Naive thymus-derived CD4-positive, alpha-beta T cell (primary cell): ENCODE measurements at regions of chr14 and their contacts with region 1.

Region 1: GRCh38 chr14:91866061-91866460 is 1.3 kb downstream of the TC2N start:
- DNase-seq: peak in 6 of 9 donors; percentile 29 to 51 (median 34)
- ATAC-seq: no peak
- H3K4me3 ChIP-seq: peak overlapping the region; percentile 88
- H3K4me3 Mint-ChIP-seq: peak overlapping the region; percentile 83 to 99 (median 96)
- H3K27ac ChIP-seq: peak overlapping the region; percentile 91
- H3K27ac Mint-ChIP-seq: peak overlapping the region; percentile 96 to 100 (median 99)
- H3K4me1 ChIP-seq: peaks cover 64 to 67% of the 10 kb centered on the region in 2 donors
- H3K4me1 Mint-ChIP-seq: peaks cover 55 to 84% (median 70%) of the 10 kb centered on the region in 7 donors
- H3K27me3 ChIP-seq: no peaks in the 10 kb centered on the region
- H3K27me3 Mint-ChIP-seq: no peaks in the 10 kb centered on the region

Region 2: DNA sequence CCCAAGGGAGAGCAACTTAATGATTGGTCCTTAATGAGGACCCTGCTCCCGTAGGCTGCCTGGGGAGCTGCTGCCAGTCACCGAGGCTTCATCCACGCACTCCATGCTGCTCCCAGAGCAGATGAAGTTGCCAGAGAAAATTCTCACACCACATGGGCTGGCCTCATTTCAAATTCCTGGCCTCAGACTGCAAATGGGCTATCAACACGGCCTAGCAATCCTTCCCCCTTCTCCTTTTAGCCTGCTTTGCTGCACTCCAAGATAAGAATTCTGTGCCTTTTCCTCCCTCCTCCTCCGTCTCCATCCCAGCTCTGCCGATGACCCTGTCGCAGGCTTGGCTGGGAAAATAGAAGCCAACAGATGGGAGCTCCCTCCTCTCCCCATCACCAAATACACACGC is 762.9 kb before region 1 on chr14:
- CTCF ChIA-PET with region 1: no interaction called
- POLR2A ChIA-PET with region 1: no interaction called
- intact Hi-C with region 1: no loop called
- DNase-seq: no peak
- ATAC-seq: no peak
- H3K4me3 ChIP-seq: no peak overlapping the region
- H3K4me3 Mint-ChIP-seq: no peak overlapping the region
- H3K27ac ChIP-seq: no peak overlapping the region
- H3K27ac Mint-ChIP-seq: peak overlapping the region in 1 of 9 donors; percentile 41
- H3K4me1 ChIP-seq: peaks cover 0 to 2% of the 10 kb centered on the region in 2 donors
- H3K4me1 Mint-ChIP-seq: peaks cover 5 to 10% (median 8%) of the 10 kb centered on the region in 7 donors
- H3K27me3 ChIP-seq: no peaks in the 10 kb centered on the region
- H3K27me3 Mint-ChIP-seq: peaks cover 0 to 10% (median 0%) of the 10 kb centered on the region in 5 donors

Region 3: GRCh38 chr14:91244501-91244901 is 621.6 kb before region 1 on chr14 and contains the start of gene GPR68:
- CTCF ChIA-PET with region 1: no interaction called
- POLR2A ChIA-PET with region 1: interaction called, 10 read pairs
- intact Hi-C with region 1: loop called in 1 of 2 experiments (anchors 5 kb)
- DNase-seq: peak in 2 of 9 donors; percentile 25 to 39
- ATAC-seq: no peak
- H3K4me3 ChIP-seq: peak within 1 kb of the TSS; percentile 59
- H3K4me3 Mint-ChIP-seq: peak within 1 kb of the TSS; percentile 72 to 91 (median 82)
- H3K27ac ChIP-seq: peak within 1 kb of the TSS; percentile 89
- H3K27ac Mint-ChIP-seq: peak within 1 kb of the TSS; percentile 79 to 100 (median 98)
- H3K4me1 ChIP-seq: peaks cover 51 to 63% of the 10 kb centered on the region in 2 donors
- H3K4me1 Mint-ChIP-seq: peaks cover 56 to 96% (median 89%) of the 10 kb centered on the region in 7 donors
- H3K27me3 ChIP-seq: no peaks in the 10 kb centered on the region
- H3K27me3 Mint-ChIP-seq: no peaks in the 10 kb centered on the region
- total RNA-seq, gene GPR68: 0.86 to 38.6 (median 2.3) TPM

Region 4: DNA sequence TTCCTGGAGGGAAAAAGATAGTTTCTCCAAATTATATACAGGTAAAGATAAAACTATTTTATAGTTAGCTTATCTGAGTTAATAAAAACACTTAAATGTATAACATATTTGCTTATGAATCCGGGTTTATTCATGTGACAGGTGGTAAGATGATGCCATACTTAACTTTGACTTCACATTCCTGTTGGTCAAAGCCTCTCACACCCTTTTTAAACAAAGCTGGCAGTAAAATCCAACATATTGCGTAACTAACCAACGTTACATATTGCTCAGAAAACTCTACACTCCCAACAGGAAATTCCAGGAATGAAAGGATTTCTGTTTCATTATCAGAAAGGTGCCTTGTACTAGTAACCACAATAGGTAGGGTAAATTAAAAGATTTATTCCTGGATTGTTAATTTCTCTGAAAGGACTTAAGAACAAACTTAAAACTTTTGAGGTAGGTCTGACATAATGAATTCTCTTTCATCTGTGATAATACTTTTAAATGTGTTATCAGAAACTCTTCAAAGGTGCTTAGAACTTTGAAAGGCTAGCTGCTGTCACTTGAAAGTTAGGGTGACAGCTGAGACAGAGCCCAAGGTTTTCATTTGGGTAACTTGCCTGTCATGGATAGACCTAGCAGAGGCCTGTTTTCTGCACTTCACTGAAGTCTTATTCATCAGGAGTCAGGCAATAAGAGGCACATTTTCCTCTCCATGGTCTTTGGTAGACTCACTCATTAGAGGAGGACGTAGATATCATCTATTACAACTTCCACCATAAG is 110.3 kb before region 1 on chr14:
- CTCF ChIA-PET with region 1: no interaction called
- POLR2A ChIA-PET with region 1: no interaction called
- intact Hi-C with region 1: no loop called
- DNase-seq: no peak
- ATAC-seq: no peak
- H3K4me3 ChIP-seq: no peak overlapping the region
- H3K4me3 Mint-ChIP-seq: no peak overlapping the region
- H3K27ac ChIP-seq: no peak overlapping the region
- H3K27ac Mint-ChIP-seq: no peak overlapping the region
- H3K4me1 ChIP-seq: no peaks in the 10 kb centered on the region
- H3K4me1 Mint-ChIP-seq: peaks cover 0 to 9% (median 2%) of the 10 kb centered on the region in 7 donors
- H3K27me3 ChIP-seq: no peaks in the 10 kb centered on the region
- H3K27me3 Mint-ChIP-seq: no peaks in the 10 kb centered on the region

Region 5: GRCh38 chr14:91796617-91797347 is 69.3 kb before region 1 on chr14:
- CTCF ChIA-PET with region 1: no interaction called
- POLR2A ChIA-PET with region 1: interaction called, 5 read pairs
- intact Hi-C with region 1: loop called in 1 of 2 experiments (anchors 2 kb)
- DNase-seq: no peak
- ATAC-seq: no peak
- H3K4me3 ChIP-seq: no peak overlapping the region
- H3K4me3 Mint-ChIP-seq: no peak overlapping the region
- H3K27ac ChIP-seq: no peak overlapping the region
- H3K27ac Mint-ChIP-seq: peak overlapping the region in 6 of 9 donors; percentile 46 to 83 (median 69)
- H3K4me1 ChIP-seq: peaks cover 0 to 12% of the 10 kb centered on the region in 2 donors
- H3K4me1 Mint-ChIP-seq: peaks cover 2 to 39% (median 15%) of the 10 kb centered on the region in 7 donors
- H3K27me3 ChIP-seq: no peaks in the 10 kb centered on the region
- H3K27me3 Mint-ChIP-seq: no peaks in the 10 kb centered on the region

Region 6: DNA sequence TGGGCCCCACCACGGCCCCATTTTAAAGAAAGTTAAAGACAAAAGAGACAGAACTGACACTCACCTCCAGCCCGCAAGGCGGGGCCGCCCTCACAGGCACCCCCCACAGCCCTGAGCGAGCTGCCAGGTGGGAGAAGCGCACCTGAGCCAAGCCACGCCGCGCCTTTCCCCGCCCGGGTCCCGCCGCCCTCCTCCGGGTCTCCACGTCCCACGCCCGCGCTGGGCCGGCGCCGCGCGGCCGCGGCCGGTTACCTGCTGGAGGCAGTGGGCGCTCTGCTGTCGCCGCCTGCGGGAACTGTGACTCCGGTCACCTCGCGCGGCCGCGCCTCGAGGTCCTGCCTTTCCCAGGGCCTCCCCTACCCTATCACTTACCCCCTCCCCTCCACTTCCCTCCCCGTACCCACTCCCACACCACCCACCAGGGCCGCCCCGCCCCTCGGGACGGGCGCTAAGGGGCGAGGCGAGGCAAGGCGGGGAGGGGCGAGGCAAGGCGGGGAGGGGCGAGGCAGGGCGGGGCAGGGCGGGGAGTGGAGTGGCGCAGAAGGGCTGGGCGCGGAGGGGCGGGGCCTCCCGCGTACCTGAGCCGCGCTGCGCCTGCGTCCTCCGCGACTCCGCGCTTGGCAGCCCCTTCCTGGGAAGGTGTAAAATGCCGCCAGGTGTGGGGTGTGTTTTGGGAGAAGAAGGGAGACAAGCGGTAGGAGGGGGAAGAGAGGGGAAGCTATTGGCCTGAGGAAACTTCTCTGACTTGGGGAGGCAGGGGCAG is 29.8 kb before region 1 on chr14:
- CTCF ChIA-PET with region 1: interaction called, 6 read pairs
- POLR2A ChIA-PET with region 1: interaction called, 194 read pairs
- intact Hi-C with region 1: loop called (anchors 1 to 2 kb)
- DNase-seq: peak; percentile 71 to 92 (median 86)
- ATAC-seq: peak; percentile 94
- H3K4me3 ChIP-seq: peak overlapping the region; percentile 61
- H3K4me3 Mint-ChIP-seq: peak overlapping the region; percentile 71 to 96 (median 90)
- H3K27ac ChIP-seq: peak overlapping the region; percentile 79
- H3K27ac Mint-ChIP-seq: peak overlapping the region in 8 of 9 donors; percentile 86 to 97 (median 91)
- H3K4me1 ChIP-seq: peaks cover 36 to 41% of the 10 kb centered on the region in 2 donors
- H3K4me1 Mint-ChIP-seq: peaks cover 40 to 93% (median 87%) of the 10 kb centered on the region in 7 donors
- H3K27me3 ChIP-seq: no peaks in the 10 kb centered on the region
- H3K27me3 Mint-ChIP-seq: peaks cover 0 to 6% (median 0%) of the 10 kb centered on the region in 5 donors

Region 7: GRCh38 chr14:91883753-91884152 is 17.7 kb after region 1 on chr14:
- CTCF ChIA-PET with region 1: interaction called, 4 read pairs
- POLR2A ChIA-PET with region 1: interaction called, 131 read pairs
- intact Hi-C with region 1: loop called in 1 of 2 experiments (anchors 2 kb)
- DNase-seq: no peak
- ATAC-seq: no peak
- H3K4me3 ChIP-seq: no peak overlapping the region
- H3K4me3 Mint-ChIP-seq: no peak overlapping the region
- H3K27ac ChIP-seq: no peak overlapping the region
- H3K27ac Mint-ChIP-seq: peak overlapping the region in 6 of 9 donors; percentile 12 to 75 (median 42)
- H3K4me1 ChIP-seq: peaks cover 19 to 21% of the 10 kb centered on the region in 2 donors
- H3K4me1 Mint-ChIP-seq: peaks cover 33 to 48% (median 38%) of the 10 kb centered on the region in 7 donors
- H3K27me3 ChIP-seq: no peaks in the 10 kb centered on the region
- H3K27me3 Mint-ChIP-seq: no peaks in the 10 kb centered on the region

Region 8: GRCh38 chr14:91899212-91899611 is 33.2 kb after region 1 on chr14:
- CTCF ChIA-PET with region 1: interaction called, 9 read pairs
- POLR2A ChIA-PET with region 1: interaction called, 131 read pairs
- intact Hi-C with region 1: no loop called
- DNase-seq: peak in 1 of 9 donors; percentile 21
- ATAC-seq: no peak
- H3K4me3 ChIP-seq: no peak overlapping the region
- H3K4me3 Mint-ChIP-seq: no peak overlapping the region
- H3K27ac ChIP-seq: no peak overlapping the region
- H3K27ac Mint-ChIP-seq: peak overlapping the region in 1 of 9 donors; percentile 77
- H3K4me1 ChIP-seq: no peaks in the 10 kb centered on the region
- H3K4me1 Mint-ChIP-seq: peaks cover 2 to 33% (median 17%) of the 10 kb centered on the region in 7 donors
- H3K27me3 ChIP-seq: no peaks in the 10 kb centered on the region
- H3K27me3 Mint-ChIP-seq: no peaks in the 10 kb centered on the region

Region 9: DNA sequence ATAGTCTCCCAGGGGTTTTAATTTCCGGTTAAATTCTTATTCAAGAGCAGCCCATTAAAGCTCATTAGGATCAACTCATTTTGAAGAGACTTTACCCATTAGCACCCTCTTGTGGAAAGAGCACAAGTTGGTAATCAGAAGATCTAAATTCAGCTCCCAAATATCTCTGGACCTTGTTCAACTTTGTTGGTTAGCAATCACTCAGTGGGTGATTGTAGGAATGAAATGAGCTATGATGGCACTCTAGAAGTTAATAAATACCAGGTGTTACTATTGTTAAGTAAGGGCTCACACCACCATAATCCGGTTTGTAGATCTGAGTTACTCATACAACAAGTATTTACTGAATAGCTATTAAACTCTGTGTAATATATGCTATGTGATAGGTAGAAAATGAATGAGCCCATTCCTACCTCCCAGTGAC is 130.9 kb after region 1 on chr14:
- CTCF ChIA-PET with region 1: no interaction called
- POLR2A ChIA-PET with region 1: no interaction called
- intact Hi-C with region 1: no loop called
- DNase-seq: peak in 7 of 9 donors; percentile 12 to 58 (median 44)
- ATAC-seq: peak; percentile 66
- H3K4me3 ChIP-seq: no peak overlapping the region
- H3K4me3 Mint-ChIP-seq: peak overlapping the region in 3 of 10 donors; percentile 37 to 70 (median 48)
- H3K27ac ChIP-seq: no peak overlapping the region
- H3K27ac Mint-ChIP-seq: peak overlapping the region in 5 of 9 donors; percentile 15 to 70 (median 65)
- H3K4me1 ChIP-seq: peaks cover 10 to 27% of the 10 kb centered on the region in 2 donors
- H3K4me1 Mint-ChIP-seq: peaks cover 27 to 54% (median 41%) of the 10 kb centered on the region in 7 donors
- H3K27me3 ChIP-seq: no peaks in the 10 kb centered on the region
- H3K27me3 Mint-ChIP-seq: no peaks in the 10 kb centered on the region